GM12878 (cell line): ENCODE measurements at regions of chr4 and their contacts with region 1.

Region 1: GRCh38 chr4:2497931-2498330 is 29.0 kb downstream of the RNF4 start:
- DNase-seq: peak; percentile 90
- ATAC-seq: peak; percentile 98
- H3K4me3 ChIP-seq: no peak overlapping the region; the same call in 1 of the 2 replicates
- H3K27ac ChIP-seq: peak overlapping the region; percentile 56
- H3K4me1 ChIP-seq: peaks cover 30% of the 10 kb centered on the region
- H3K27me3 ChIP-seq: no peaks in the 10 kb centered on the region
- CTCF ChIP-seq: no peak
- EP300 ChIP-seq: no peak
- POLR2A ChIP-seq: no peak
- RAD21 ChIP-seq: no peak

Region 2: GRCh38 chr4:2393353-2394270 is 104.3 kb before region 1 on chr4:
- CTCF ChIA-PET with region 1: no interaction called
- POLR2A ChIA-PET with region 1: no interaction called
- RAD21 ChIA-PET with region 1: no interaction called
- SMC1A ChIA-PET with region 1: no interaction called
- in situ Hi-C with region 1: no loop called
- intact Hi-C with region 1: no loop called
- DNase-seq: no peak
- ATAC-seq: peak; percentile 85
- H3K4me3 ChIP-seq: 0 out of 2 replicates have a peak overlapping the region, but pooled peaks have one; percentile 5
- H3K27ac ChIP-seq: no peak overlapping the region
- H3K4me1 ChIP-seq: no peaks in the 10 kb centered on the region
- H3K27me3 ChIP-seq: no peaks in the 10 kb centered on the region
- CTCF ChIP-seq: no peak; a peak in 1 of 6 replicates
- EP300 ChIP-seq: no peak
- POLR2A ChIP-seq: no peak
- RAD21 ChIP-seq: no peak

Region 3: DNA sequence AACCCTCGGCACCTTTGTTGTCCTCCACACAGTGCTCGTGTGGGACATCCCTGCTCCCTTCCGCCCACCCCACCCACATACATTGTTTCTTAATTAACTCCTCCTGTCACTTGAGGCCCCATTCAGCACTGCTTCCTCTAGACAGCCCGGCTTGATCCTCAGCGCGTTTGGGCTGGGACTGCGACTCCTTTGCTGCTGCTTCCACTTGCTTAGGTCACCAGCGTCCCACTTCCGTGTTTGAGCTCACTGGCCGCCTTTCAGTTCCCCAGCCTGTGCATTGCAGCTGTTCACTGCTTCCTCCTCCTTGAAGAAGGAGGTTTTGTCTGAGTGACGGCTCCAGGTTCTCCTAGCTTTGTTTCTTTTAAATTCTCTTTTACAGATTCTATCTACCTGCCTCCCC is 12.9 kb before region 1 on chr4:
- CTCF ChIA-PET with region 1: interaction called, 9 read pairs
- POLR2A ChIA-PET with region 1: interaction called, 13 read pairs
- RAD21 ChIA-PET with region 1: interaction called, 51 read pairs
- SMC1A ChIA-PET with region 1: interaction called, 17 read pairs
- in situ Hi-C with region 1: no loop called
- intact Hi-C with region 1: loop called (anchors 2 kb)
- DNase-seq: peak; percentile 62
- ATAC-seq: peak; percentile 78
- H3K4me3 ChIP-seq: peak overlapping the region; percentile 51; the same call in 1 of the 2 replicates
- H3K27ac ChIP-seq: peak overlapping the region; percentile 57
- H3K4me1 ChIP-seq: peaks cover 81% of the 10 kb centered on the region
- H3K27me3 ChIP-seq: no peaks in the 10 kb centered on the region
- CTCF ChIP-seq: no peak
- EP300 ChIP-seq: 0 out of 4 replicates have a peak, but pooled peaks of 1 of the 2 experiments have one; percentile 22
- POLR2A ChIP-seq: no peak
- RAD21 ChIP-seq: no peak